ENCODE measurements at regions of chr5 and their contacts with region 1.

Region 1: DNA sequence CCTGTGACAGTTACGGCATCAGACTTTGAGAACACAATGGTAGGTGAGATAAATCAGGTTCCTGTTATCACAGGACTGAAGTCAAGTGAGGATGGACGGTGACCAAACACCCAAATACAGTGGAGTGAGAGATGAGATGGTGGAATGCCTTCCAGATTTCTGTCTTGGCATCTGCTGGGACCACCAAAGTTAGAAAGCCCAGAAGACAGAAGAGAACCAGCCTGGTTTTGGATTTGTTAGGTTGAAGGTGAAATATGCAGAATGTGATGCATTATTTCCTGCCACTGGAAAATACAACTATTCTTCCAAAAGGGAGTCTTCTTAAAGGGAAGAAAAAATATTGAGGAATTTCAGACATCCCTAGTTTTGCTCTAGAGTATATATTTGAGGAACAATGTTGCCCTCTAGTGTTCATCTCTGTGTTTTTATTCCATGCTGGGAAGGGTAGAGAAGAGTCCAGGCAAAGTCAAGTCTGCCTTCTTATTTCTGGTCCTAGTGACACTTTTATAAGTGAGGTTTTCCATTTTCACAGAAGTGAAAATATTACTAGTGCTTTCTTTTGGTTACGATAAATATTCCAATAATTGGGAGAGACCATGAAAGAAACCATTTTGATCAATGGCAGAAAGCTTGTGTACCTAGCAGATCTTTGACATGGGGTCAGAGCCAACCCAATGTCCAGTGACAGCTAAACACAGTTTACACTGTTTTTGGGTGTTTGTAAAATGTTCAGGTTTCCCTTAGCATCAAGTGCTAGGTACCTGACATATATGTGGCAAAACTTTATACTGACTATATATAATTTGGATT is 142.3 kb upstream of the ANKH start:
- DNase-seq: no peak
- ATAC-seq: peak; percentile 74 to 86 (median 80)
- H3K4me3 ChIP-seq: no peak overlapping the region
- H3K27ac ChIP-seq: no peak overlapping the region
- H3K4me1 ChIP-seq: peaks cover 8% of the 10 kb centered on the region
- H3K27me3 ChIP-seq: no peaks in the 10 kb centered on the region
- CTCF ChIP-seq: peak; percentile 77

Region 2: GRCh38 chr5:14399054-14399692 is 614.7 kb before region 1 on chr5:
- intact Hi-C with region 1: loop called in 1 of 2 experiments (anchors 10 kb)
- DNase-seq: no peak
- ATAC-seq: peak in 3 of 4 donors; percentile 57 to 80 (median 61)
- H3K4me3 ChIP-seq: no peak overlapping the region
- H3K27ac ChIP-seq: no peak overlapping the region
- H3K4me1 ChIP-seq: no peaks in the 10 kb centered on the region
- H3K27me3 ChIP-seq: no peaks in the 10 kb centered on the region
- CTCF ChIP-seq: peak; percentile 66

Region 3: DNA sequence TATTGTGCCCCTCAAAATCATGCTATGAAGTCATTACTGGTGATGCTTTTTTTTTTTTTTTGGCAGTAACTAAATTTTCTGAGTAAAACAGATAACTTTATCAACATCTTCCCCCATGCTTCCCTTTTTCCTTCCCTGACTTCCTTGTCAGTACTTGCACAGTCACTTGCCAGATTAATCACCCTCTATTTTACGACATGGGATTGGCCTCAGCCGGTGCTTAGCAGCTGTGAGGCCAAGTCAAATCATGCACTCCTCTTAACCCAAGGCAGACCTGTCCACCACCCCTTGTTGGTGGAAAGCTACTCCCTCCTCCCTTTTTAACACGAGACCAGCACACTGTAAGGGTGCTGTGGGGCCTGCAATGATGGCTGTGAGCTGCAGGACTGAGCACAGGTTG is 550.2 kb before region 1 on chr5:
- intact Hi-C with region 1: no loop called
- DNase-seq: no peak
- ATAC-seq: peak; percentile 61 to 83 (median 74)
- H3K4me3 ChIP-seq: no peak overlapping the region
- H3K27ac ChIP-seq: no peak overlapping the region
- H3K4me1 ChIP-seq: peaks cover 4% of the 10 kb centered on the region
- H3K27me3 ChIP-seq: no peaks in the 10 kb centered on the region
- CTCF ChIP-seq: no peak

Region 4: GRCh38 chr5:15056988-15057592 is 43.2 kb after region 1 on chr5:
- intact Hi-C with region 1: no loop called
- DNase-seq: no peak
- ATAC-seq: no peak
- H3K4me3 ChIP-seq: no peak overlapping the region
- H3K27ac ChIP-seq: no peak overlapping the region
- H3K4me1 ChIP-seq: no peaks in the 10 kb centered on the region
- H3K27me3 ChIP-seq: peaks cover 0 to 4% (median 0%) of the 10 kb centered on the region in 3 donors
- CTCF ChIP-seq: no peak

Region 5: DNA sequence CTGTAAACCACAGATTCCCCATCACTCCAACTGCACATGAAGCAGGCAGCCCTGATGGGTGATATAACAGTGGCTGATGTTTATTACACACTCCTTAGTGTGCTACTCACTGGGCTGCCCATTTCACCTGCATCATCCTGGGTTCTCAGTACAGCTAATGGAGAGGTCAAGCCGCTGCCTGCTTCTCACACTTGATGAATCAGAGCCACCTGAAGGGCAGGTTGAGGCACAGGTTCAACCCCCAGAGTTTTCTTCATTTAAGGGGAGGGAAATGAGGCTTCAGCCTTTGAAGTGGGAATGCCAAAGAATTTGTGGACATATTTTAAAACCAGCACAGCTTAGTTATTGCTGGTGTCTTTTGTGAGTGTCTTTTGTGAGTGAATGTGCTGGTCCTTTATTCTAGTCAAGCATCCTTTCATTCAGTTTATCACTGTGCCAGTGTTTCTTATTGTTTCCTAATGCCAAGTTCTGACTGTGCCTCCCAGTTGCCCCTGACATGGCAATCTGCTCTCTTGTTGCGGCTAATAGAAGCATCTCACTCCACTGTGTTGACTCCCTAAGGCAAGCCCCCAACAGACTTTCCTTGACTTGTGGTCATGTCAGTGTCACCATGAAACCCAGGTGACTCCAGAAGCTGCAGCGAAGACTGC is 595.3 kb after region 1 on chr5:
- intact Hi-C with region 1: no loop called
- DNase-seq: no peak
- ATAC-seq: no peak
- H3K4me3 ChIP-seq: no peak overlapping the region
- H3K27ac ChIP-seq: no peak overlapping the region
- H3K4me1 ChIP-seq: no peaks in the 10 kb centered on the region
- H3K27me3 ChIP-seq: no peaks in the 10 kb centered on the region
- CTCF ChIP-seq: no peak